WTC11 (cell line): ENCODE measurements at regions of chr13 and their contacts with region 1.

Region 1: GRCh38 chr13:114111577-114111976 is 20.8 kb downstream of the RASA3 start:
- DNase-seq: no peak
- ATAC-seq: no peak
- H3K4me3 Mint-ChIP-seq: no peak overlapping the region
- H3K27ac Mint-ChIP-seq: peak overlapping the region; percentile 80
- H3K4me1 Mint-ChIP-seq: peaks cover 52% of the 10 kb centered on the region
- H3K27me3 Mint-ChIP-seq: no peaks in the 10 kb centered on the region
- CTCF ChIP-seq: no peak

Region 2: DNA sequence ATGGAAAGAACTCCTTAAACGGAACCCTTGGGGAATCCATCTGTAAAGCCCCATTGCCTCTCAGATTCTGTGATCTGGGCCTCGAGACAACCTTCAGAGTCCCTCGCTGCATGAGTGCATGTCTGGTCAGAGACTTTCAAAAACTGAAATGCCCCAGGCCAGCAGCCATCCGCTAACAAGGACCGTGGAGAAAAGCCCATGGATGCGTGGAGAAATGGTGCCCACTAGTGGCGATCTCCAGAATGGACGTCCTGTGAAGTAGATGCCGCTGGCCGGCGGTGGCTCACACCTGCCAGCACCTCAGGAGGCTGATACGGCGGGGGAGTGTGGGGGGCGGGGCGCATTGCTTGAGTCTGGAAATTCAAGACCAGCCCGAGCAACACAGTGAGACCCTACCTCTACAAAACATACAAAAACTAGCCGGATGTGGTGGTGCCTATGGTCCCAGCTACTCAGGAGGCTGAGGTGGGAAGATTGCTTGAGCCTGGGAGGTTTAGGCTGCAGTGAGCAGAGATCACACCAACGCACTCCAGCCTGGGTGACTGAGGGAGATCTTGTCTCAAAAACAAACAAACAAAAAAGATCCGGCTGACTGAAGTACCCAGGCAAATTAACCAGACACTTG is 115.2 kb after region 1 on chr13:
- CTCF ChIA-PET with region 1: interaction called, 12 read pairs
- POLR2A ChIA-PET with region 1: no interaction called
- DNase-seq: peak; percentile 94
- ATAC-seq: peak; percentile 91
- H3K4me3 Mint-ChIP-seq: no peak overlapping the region
- H3K27ac Mint-ChIP-seq: no peak overlapping the region; the same call in 1 of the 2 replicates
- H3K4me1 Mint-ChIP-seq: peaks cover 60% of the 10 kb centered on the region
- H3K27me3 Mint-ChIP-seq: peaks cover 1% of the 10 kb centered on the region; the same call in 1 of the 2 replicates
- CTCF ChIP-seq: peak; percentile 66